B cell (primary cell): ENCODE measurements at regions of chr19 and their contacts with region 1.

Region 1: DNA sequence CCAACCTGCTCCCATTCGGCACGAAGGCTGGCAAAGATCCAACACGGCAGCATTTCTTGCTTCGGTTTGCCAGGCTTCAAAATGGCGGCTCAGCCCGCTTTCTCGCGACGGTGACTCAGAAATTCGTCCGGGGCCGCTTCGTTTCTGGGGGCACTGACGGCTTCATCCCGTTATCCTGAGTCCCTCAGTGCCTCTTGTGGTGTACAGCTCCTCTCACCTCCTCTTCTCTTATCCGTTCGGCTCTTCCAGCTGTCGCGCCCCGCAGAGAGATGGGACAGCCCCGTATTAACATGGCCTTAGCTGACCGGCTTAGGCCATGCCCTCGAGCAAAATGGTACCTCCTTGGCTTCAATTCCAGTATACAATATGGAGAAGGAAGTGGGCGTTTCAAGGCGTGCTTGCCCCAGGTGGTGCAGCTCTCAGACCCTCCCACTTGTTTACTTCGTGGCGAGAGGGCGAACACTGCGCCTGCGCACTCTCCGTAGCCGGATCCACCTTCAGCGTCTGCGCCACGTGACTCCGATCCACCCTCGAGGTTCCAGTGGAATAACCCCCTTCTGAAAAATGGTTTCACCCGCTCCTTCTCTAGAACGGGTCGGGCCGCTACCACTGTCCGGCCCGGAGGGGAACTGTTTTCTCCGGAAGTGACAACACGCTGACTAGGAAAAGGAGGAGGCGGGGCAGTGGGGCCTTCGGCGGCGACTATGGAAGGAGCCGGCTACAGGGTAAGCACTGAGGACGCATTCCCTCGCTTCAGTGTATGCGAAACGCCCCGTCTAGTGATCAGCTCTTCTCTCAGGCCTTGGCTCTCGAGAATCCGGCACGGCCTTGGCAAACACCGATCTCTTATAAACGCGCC is at the starts of genes AKT1S1 and TBC1D17:
- DNase-seq: peak; percentile 100
- ATAC-seq: peak; percentile 65
- H3K4me3 ChIP-seq: peak within 1 kb of the TSS; percentile 85 to 96 (median 95)
- H3K4me3 Mint-ChIP-seq: no peak within 1 kb of the TSS
- H3K27ac ChIP-seq: peak within 1 kb of the TSS; percentile 94 to 98
- H3K27ac Mint-ChIP-seq: no peak within 1 kb of the TSS
- H3K4me1 ChIP-seq: peaks cover 12 to 20% of the 10 kb centered on the region in 2 donors
- H3K4me1 Mint-ChIP-seq: peaks cover 21% of the 10 kb centered on the region
- H3K27me3 ChIP-seq: no peaks in the 10 kb centered on the region
- H3K27me3 Mint-ChIP-seq: no peaks in the 10 kb centered on the region
- CTCF ChIP-seq: no peak
- total RNA-seq, gene AKT1S1: 23.0 and 25.2 TPM in 2 replicates
- total RNA-seq, gene TBC1D17: 94.3 and 98.7 TPM in 2 replicates

Region 2: DNA sequence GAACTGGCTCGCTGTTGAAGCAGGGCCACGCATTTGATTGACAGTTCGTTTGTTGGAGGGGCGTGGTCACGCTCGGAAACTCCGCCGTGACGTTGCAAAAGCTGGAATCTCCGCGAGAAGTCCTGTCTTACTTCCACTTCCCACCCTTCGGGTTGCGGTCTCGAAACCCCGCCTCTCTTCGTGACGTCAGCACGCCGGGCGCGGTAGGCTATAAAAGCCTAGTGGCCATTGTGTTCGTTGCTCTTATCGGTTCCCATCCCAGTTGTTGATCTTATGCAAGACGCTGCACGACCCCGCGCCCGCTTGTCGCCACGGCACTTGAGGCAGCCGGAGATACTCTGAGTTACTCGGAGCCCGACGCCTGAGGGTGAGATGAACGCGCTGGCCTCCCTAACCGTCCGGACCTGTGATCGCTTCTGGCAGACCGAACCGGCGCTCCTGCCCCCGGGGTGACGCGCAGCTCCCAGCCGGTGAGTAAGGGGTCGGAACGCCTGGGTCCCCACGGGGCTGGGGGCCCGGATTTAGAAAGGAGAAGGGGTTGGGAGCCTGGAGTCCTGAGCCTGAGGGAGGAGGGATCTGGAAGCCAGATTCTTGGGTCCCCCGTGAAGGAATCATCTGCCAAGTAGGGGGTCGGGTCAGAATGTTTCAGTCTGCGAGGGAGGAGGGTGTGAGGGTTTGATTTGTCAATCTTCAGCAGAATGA is 1004.9 kb before region 1 on chr19 and contains the start of gene PPP1R15A:
- CTCF ChIA-PET with region 1: no interaction called
- POLR2A ChIA-PET with region 1: no interaction called
- intact Hi-C with region 1: loop called (anchors 2 kb)
- DNase-seq: peak; percentile 99
- ATAC-seq: peak; percentile 53
- H3K4me3 ChIP-seq: peak within 1 kb of the TSS; percentile 70 to 100 (median 95)
- H3K4me3 Mint-ChIP-seq: peak within 1 kb of the TSS; percentile 98
- H3K27ac ChIP-seq: peak within 1 kb of the TSS; percentile 96 to 100
- H3K27ac Mint-ChIP-seq: peak within 1 kb of the TSS; percentile 100
- H3K4me1 ChIP-seq: peaks cover 30 to 48% of the 10 kb centered on the region in 2 donors
- H3K4me1 Mint-ChIP-seq: peaks cover 40% of the 10 kb centered on the region
- H3K27me3 ChIP-seq: peaks cover 0 to 2% (median 0%) of the 10 kb centered on the region in 4 experiments
- H3K27me3 Mint-ChIP-seq: peaks cover 5% of the 10 kb centered on the region
- CTCF ChIP-seq: no peak
- total RNA-seq, gene PPP1R15A: 122 and 128 TPM in 2 replicates

Region 3: GRCh38 chr19:49590071-49590970 is 286.9 kb before region 1 on chr19:
- CTCF ChIA-PET with region 1: no interaction called
- POLR2A ChIA-PET with region 1: no interaction called
- intact Hi-C with region 1: loop called (anchors 2 kb)
- DNase-seq: peak; percentile 97
- ATAC-seq: peak; percentile 80
- H3K4me3 ChIP-seq: peak overlapping the region; percentile 69 to 85 (median 77)
- H3K4me3 Mint-ChIP-seq: peak overlapping the region; percentile 84
- H3K27ac ChIP-seq: peak overlapping the region; percentile 72 to 85
- H3K27ac Mint-ChIP-seq: peak overlapping the region; percentile 91
- H3K4me1 ChIP-seq: peaks cover 16 to 26% of the 10 kb centered on the region in 2 donors
- H3K4me1 Mint-ChIP-seq: peaks cover 27% of the 10 kb centered on the region
- H3K27me3 ChIP-seq: no peaks in the 10 kb centered on the region
- H3K27me3 Mint-ChIP-seq: no peaks in the 10 kb centered on the region
- CTCF ChIP-seq: peak; percentile 13

Region 4: GRCh38 chr19:49817964-49818648 is 59.1 kb before region 1 on chr19 and contains the start of gene MED25:
- CTCF ChIA-PET with region 1: interaction called, 4 read pairs
- POLR2A ChIA-PET with region 1: interaction called, 30 read pairs
- intact Hi-C with region 1: loop called (anchors 1 kb)
- DNase-seq: peak; percentile 98
- ATAC-seq: peak; percentile 56
- H3K4me3 ChIP-seq: peak within 1 kb of the TSS; percentile 69 to 99 (median 94)
- H3K4me3 Mint-ChIP-seq: peak within 1 kb of the TSS; percentile 97
- H3K27ac ChIP-seq: peak within 1 kb of the TSS; percentile 89 to 98
- H3K27ac Mint-ChIP-seq: peak within 1 kb of the TSS; percentile 98
- H3K4me1 ChIP-seq: peaks cover 13 to 29% of the 10 kb centered on the region in 2 donors
- H3K4me1 Mint-ChIP-seq: peaks cover 41% of the 10 kb centered on the region
- H3K27me3 ChIP-seq: no peaks in the 10 kb centered on the region
- H3K27me3 Mint-ChIP-seq: no peaks in the 10 kb centered on the region
- CTCF ChIP-seq: peak; percentile 44
- total RNA-seq, gene MED25: 123 and 126 TPM in 2 replicates

Region 5: DNA sequence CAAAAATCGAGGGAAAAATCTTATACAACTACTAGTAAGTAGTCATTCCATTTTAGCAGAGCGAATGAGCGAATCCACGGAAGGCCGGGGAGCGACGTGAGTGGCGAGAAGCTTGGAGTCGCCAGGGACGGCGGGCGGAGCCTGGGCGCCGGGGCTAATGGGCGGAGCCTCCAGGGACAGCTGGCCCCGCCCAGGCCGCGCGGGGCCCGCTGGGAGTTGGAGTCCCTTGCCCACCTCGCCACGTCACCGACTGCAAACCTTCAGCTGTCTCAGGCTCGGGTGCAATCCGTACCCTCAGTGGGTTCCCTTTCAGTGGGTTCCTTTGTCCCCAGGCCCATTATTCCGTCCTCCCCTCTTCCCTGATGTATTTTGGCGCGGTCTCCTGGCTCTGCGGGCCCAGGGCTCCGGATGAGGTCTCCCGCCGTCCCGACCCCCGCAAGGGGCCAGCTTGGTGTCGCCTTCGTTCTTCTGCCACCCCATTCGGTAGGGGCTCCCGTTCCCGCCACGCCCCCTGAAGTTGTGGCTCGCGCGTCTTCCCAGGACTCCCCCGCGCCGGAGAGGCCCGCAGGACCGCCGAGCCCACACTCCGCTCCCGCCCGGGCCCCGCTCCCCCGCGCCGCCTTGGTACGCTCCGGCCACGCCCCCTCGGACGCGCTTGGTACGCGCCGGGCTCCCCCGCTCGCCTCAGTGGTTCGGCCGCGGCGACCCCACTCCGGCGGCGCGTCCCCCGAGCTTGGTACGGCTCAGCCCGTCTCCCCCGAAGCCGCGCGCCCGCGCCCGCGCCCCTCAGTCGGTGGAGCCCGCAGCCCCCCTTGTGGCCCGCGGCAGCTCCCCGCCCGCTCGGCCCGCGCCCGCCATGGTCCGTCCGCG is 26.5 kb before region 1 on chr19 and contains the start of gene PTOV1:
- CTCF ChIA-PET with region 1: interaction called, 4 read pairs
- POLR2A ChIA-PET with region 1: interaction called, 23 read pairs
- intact Hi-C with region 1: loop called (anchors 1 kb)
- DNase-seq: peak; percentile 93
- ATAC-seq: peak; percentile 82
- H3K4me3 ChIP-seq: peak within 1 kb of the TSS; percentile 73 to 95 (median 89)
- H3K4me3 Mint-ChIP-seq: peak within 1 kb of the TSS; percentile 93
- H3K27ac ChIP-seq: peak within 1 kb of the TSS; percentile 91 to 95
- H3K27ac Mint-ChIP-seq: peak within 1 kb of the TSS; percentile 98
- H3K4me1 ChIP-seq: peaks cover 30 to 49% of the 10 kb centered on the region in 2 donors
- H3K4me1 Mint-ChIP-seq: peaks cover 48% of the 10 kb centered on the region
- H3K27me3 ChIP-seq: no peaks in the 10 kb centered on the region
- H3K27me3 Mint-ChIP-seq: no peaks in the 10 kb centered on the region
- CTCF ChIP-seq: no peak
- total RNA-seq, gene PTOV1: 225 and 230 TPM in 2 replicates

Region 6: GRCh38 chr19:49896863-49897621 is 19.8 kb after region 1 on chr19 and contains the start of gene IL4I1:
- CTCF ChIA-PET with region 1: interaction called, 3 read pairs
- POLR2A ChIA-PET with region 1: interaction called, 10 read pairs
- intact Hi-C with region 1: loop called (anchors 1 kb)
- DNase-seq: peak; percentile 91
- ATAC-seq: peak; percentile 74
- H3K4me3 ChIP-seq: peak within 1 kb of the TSS; percentile 34 to 60 (median 44)
- H3K4me3 Mint-ChIP-seq: peak within 1 kb of the TSS; percentile 89
- H3K27ac ChIP-seq: peak within 1 kb of the TSS; percentile 82 to 84
- H3K27ac Mint-ChIP-seq: peak within 1 kb of the TSS; percentile 97
- H3K4me1 ChIP-seq: peaks cover 30 to 39% of the 10 kb centered on the region in 2 donors
- H3K4me1 Mint-ChIP-seq: peaks cover 40% of the 10 kb centered on the region
- H3K27me3 ChIP-seq: no peaks in the 10 kb centered on the region
- H3K27me3 Mint-ChIP-seq: no peaks in the 10 kb centered on the region
- CTCF ChIP-seq: no peak
- total RNA-seq, gene IL4I1: 3.1 and 3.9 TPM in 2 replicates

Region 7: DNA sequence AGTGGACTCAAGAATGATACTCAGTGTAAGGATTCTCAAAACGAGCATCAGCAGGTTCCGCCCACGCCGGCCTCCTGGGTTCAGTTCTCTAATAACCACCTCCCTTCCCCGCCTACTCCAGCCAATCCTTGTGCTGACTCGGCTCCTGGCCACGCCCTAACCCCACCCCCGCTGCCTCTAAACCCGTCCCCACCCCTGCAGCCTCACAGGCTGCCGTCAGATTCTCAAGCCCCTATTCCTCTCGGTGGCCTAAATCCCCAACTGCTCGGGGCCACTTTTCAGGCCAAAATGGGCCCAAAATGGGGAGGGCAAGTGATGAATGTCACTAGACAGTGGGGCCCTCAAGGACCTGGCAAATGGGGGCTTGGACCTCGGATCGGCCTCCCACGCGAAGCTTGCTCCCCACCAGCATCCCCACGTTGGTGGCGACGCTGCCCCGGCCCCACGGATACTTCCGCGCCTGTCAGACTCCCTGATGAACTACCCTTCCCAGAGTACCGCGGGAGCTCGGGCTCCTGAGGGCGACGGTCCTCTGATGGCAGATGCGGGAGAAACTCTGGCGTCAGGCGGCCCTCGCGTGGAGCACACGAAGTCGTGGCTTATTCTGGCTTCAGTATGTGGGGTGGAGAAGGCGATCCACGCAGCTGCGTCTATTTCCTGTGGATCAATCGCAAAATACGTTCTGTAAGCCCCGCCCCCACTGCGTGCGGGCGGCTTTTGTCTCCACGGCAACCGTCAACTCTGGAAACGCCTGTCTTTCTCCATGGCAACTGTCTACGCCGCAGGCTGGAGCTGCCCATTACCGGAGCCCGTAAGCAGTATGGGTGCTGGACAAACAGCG is 173.4 kb after region 1 on chr19:
- CTCF ChIA-PET with region 1: no interaction called
- POLR2A ChIA-PET with region 1: no interaction called
- intact Hi-C with region 1: no loop called
- DNase-seq: peak; percentile 87
- ATAC-seq: peak; percentile 94
- H3K4me3 ChIP-seq: peak overlapping the region; percentile 22 to 65 (median 54)
- H3K4me3 Mint-ChIP-seq: peak overlapping the region; percentile 94
- H3K27ac ChIP-seq: peak overlapping the region; percentile 46 to 51
- H3K27ac Mint-ChIP-seq: peak overlapping the region; percentile 62
- H3K4me1 ChIP-seq: peaks cover 5 to 17% of the 10 kb centered on the region in 2 donors
- H3K4me1 Mint-ChIP-seq: peaks cover 15% of the 10 kb centered on the region
- H3K27me3 ChIP-seq: peaks cover 0 to 6% (median 0%) of the 10 kb centered on the region in 4 experiments
- H3K27me3 Mint-ChIP-seq: peaks cover 9% of the 10 kb centered on the region
- CTCF ChIP-seq: no peak